Activated B cell treated with CpG ODN at 0.5 μM for 24 hours (primary cell): ENCODE measurements at regions of chr1 and their contacts with region 1.

Region 1: DNA sequence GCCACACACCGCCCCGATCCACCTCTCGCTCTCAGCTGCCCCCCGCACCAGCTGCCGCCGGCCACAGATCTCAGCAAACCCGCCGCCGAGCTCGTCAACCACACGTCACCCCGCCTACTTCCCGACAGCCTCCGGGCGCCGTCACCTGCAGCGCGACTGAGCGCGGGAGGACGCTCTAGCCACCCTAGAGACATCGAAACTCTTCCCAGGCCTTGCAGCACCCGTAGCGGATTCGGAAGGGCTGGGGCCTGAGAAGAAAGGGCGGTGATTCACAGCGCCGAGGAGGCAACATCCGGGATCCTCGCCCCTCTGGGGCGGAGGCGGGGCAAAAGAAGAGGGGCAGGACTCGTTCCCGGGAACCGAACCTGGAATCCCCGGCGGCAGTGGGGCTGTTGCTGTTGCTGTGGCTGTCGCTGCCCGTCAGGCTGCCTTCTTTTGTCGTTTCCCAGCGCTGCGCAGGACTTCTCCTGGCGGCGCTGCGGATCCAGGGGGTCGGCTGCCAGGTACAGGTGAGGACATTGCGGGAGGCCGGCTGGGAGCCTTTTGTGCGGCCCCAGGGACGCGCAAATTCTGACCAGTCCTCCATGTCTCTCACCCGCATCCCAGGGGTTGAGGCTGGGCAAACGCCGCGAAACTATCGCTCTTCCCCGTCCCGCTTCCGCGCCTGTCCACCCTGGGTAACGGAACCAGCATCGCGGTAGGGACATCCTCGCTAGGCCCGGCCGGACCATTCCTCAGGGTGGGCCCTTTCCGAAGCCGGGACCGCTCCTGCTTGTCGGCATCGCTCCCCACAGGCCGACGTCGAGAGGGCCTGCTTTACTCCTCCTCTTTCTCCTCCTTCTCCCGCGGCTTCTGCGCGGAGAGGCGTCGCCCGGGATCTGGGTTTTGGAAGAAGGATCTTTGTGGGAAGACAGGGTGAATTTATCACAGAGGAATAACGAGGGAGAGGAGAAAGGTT is at the starts of genes RO60 and UCHL5:
- DNase-seq: peak; percentile 85
- ATAC-seq: peak; percentile 94
- H3K4me3 Mint-ChIP-seq: peak within 1 kb of the TSS; percentile 100
- H3K27ac Mint-ChIP-seq: peak within 1 kb of the TSS; percentile 99
- H3K4me1 Mint-ChIP-seq: peaks cover 54% of the 10 kb centered on the region
- H3K27me3 Mint-ChIP-seq: no peaks in the 10 kb centered on the region
- CTCF ChIP-seq: no peak
- total RNA-seq, gene RO60: 55.9 and 61.1 TPM in 2 replicates
- total RNA-seq, gene UCHL5: 32.3 and 36.4 TPM in 2 replicates

Region 2: DNA sequence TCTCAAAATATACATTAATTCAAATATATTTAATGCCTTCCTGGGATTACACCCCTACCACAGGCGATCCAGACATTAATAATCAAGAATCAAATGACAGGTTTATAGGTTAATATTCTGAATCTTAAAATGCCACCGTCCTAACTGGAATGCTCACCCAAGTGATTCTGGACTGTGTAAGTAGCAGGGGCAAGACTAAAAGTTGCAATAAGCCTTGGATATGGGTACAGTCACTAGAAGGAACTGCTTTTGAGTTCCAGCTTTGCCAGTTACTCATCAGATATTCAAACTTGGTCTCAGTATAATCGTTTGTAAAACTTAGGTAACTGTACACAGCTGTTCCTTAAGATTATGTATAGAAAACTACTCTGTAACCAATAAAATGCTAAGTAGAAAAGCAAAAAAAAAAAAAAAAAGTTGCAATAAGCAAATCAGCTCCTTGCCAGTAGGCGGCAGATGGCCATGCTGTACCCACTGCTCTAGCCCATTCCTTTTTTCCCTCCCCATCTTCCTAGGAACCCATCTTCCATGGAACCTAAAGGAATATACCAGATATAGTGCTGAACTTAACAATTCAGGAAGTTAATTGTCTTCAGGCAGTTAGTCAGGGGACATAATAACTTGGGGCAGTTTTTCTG is 10.3 kb after region 1 on chr1:
- CTCF ChIA-PET with region 1: interaction called, 3 read pairs
- POLR2A ChIA-PET with region 1: interaction called, 7 read pairs
- intact Hi-C with region 1: loop called (anchors 1 kb)
- DNase-seq: no peak
- ATAC-seq: peak; percentile 25
- H3K4me3 Mint-ChIP-seq: no peak overlapping the region
- H3K27ac Mint-ChIP-seq: peak overlapping the region; percentile 65
- H3K4me1 Mint-ChIP-seq: peaks cover 45% of the 10 kb centered on the region
- H3K27me3 Mint-ChIP-seq: no peaks in the 10 kb centered on the region
- CTCF ChIP-seq: no peak

Region 3: GRCh38 chr1:193104906-193105820 is 45.6 kb after region 1 on chr1 and contains the start of gene GLRX2:
- CTCF ChIA-PET with region 1: no interaction called
- POLR2A ChIA-PET with region 1: interaction called, 22 read pairs
- intact Hi-C with region 1: loop called (anchors 1 kb)
- DNase-seq: peak; percentile 50
- ATAC-seq: peak; percentile 85
- H3K4me3 Mint-ChIP-seq: peak within 1 kb of the TSS; percentile 93
- H3K27ac Mint-ChIP-seq: peak within 1 kb of the TSS; percentile 76
- H3K4me1 Mint-ChIP-seq: peaks cover 18% of the 10 kb centered on the region
- H3K27me3 Mint-ChIP-seq: no peaks in the 10 kb centered on the region
- CTCF ChIP-seq: no peak
- total RNA-seq, gene GLRX2: 10.9 and 14.4 TPM in 2 replicates

Region 4: DNA sequence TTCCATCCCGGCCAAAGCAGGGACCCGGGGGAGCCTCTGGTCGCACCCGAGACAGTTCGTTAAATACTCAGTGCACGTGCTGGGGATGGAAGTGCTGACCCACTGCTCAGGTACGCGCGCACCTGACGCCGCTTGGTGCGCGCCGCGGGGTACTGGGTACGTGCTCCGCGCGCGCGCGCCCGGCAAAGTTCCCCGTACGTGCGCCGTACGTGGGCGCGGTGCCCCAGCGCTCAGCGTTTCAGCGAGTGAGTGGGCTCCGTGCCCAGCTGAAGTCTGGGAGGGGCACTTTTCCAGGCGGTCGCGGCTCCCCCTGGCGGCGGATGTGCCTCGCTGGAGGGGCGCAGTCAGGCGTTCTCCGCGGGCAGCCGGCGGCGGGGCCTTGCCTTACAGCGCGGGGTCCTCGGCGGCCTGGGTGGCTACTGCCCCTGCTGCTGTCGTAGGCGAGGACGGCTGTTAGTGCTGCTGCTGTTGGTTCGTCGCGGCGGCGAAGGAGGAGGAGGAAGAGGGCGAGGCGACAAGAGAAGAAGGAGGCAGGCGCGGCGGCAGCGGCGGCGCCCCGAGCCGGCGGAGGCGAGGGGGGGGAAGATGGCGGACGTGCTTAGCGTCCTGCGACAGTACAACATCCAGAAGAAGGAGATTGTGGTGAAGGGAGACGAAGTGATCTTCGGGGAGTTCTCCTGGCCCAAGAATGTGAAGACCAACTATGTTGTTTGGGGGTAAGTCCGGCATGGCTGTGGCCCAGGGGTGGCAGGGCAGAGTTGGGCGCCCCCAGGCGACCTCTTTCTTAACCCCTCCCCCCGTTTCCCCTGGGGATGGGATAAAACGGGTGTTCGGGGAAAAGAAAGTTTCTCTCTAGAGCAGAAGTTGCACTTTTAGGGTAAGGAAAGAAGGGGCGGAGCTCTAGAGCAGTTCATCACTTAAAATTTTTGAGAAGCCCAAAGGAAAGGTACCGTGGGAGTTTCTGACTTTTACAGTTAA is 62.4 kb after region 1 on chr1 and contains the start of gene CDC73:
- CTCF ChIA-PET with region 1: interaction called, 8 read pairs
- POLR2A ChIA-PET with region 1: interaction called, 37 read pairs
- intact Hi-C with region 1: loop called (anchors 1 kb)
- DNase-seq: peak; percentile 99
- ATAC-seq: peak; percentile 90
- H3K4me3 Mint-ChIP-seq: peak within 1 kb of the TSS; percentile 93
- H3K27ac Mint-ChIP-seq: peak within 1 kb of the TSS; percentile 94
- H3K4me1 Mint-ChIP-seq: peaks cover 43% of the 10 kb centered on the region
- H3K27me3 Mint-ChIP-seq: no peaks in the 10 kb centered on the region
- CTCF ChIP-seq: peak; percentile 17
- total RNA-seq, gene CDC73: 55.9 and 59.1 TPM in 2 replicates